B cell (primary cell): ENCODE measurements at regions of chr10 and their contacts with region 1.

Region 1: DNA sequence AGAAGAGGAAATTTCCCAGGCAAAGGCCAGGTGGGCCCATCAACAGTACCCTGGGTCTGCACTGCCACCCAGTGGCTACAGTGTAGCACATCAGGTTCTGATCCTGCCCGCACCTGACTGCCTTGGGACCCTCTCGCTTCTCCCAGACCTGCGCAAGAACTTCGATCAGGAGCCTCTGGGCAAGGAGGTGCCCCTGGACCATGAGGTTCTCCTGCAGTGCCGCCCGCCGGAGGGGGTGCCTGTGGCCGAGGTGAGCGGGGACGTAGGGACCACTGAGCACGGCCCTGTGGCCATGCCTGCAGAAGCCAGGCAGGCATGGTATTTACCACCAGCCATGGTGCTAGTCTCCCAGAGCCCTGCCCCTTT is 33.9 kb upstream of the SLC29A3 start:
- DNase-seq: peak; percentile 42
- ATAC-seq: peak; percentile 56
- H3K4me3 ChIP-seq: no peak overlapping the region
- H3K4me3 Mint-ChIP-seq: no peak overlapping the region
- H3K27ac ChIP-seq: no peak overlapping the region
- H3K27ac Mint-ChIP-seq: no peak overlapping the region
- H3K4me1 ChIP-seq: no peaks in the 10 kb centered on the region
- H3K4me1 Mint-ChIP-seq: peaks cover 5% of the 10 kb centered on the region
- H3K27me3 ChIP-seq: no peaks in the 10 kb centered on the region
- H3K27me3 Mint-ChIP-seq: no peaks in the 10 kb centered on the region
- CTCF ChIP-seq: peak; percentile 70

Region 2: DNA sequence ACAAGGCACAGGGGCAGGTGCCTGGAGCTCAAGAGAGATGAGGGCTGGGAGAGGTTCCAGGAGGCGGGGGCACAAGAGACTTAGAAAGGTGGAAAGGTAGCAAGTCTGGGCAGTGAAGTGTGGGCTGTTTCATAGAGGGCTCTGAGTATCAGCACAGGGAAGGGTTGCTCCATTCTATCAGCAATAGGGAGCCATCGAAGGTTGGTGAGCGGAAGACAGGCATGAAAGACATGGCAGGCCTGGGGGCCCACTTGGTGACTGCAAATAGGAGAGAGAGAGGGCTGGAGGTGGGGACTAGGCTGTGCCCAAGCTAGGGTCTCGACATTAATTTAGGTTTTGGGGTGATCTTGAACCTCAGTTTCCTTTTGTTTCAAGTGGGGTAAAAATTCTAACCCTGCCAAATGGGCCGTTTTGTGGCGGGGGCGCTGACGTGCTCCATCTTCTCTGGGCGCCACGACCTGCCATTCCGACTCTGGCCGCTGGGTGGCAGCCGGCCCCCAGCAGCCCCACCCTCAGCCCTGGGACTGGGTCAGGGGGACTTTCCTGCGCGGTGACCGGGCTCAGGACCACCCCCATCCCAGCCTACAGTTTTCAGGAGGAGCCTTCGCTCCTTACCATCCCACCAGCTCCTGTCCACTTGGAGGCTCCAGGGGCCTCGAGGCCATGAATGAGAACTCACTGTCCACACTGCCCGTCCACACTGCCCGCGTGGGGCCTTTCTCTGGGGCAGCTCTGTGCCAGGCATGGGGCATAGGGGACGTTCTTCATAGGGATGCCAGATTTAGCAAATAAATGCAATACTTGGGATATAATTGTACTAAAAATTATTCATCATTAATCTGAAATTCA is 359.6 kb before region 1 on chr10:
- CTCF ChIA-PET with region 1: interaction called, 11 read pairs
- POLR2A ChIA-PET with region 1: no interaction called
- intact Hi-C with region 1: loop called (anchors 2 kb)
- DNase-seq: peak; percentile 58
- ATAC-seq: peak; percentile 60
- H3K4me3 ChIP-seq: no peak overlapping the region
- H3K4me3 Mint-ChIP-seq: no peak overlapping the region
- H3K27ac ChIP-seq: no peak overlapping the region
- H3K27ac Mint-ChIP-seq: no peak overlapping the region
- H3K4me1 ChIP-seq: no peaks in the 10 kb centered on the region
- H3K4me1 Mint-ChIP-seq: peaks cover 6% of the 10 kb centered on the region
- H3K27me3 ChIP-seq: peaks cover 0 to 3% (median 0%) of the 10 kb centered on the region in 4 experiments
- H3K27me3 Mint-ChIP-seq: peaks cover 26% of the 10 kb centered on the region
- CTCF ChIP-seq: peak; percentile 88